ENCODE measurements at regions of chr17 and their contacts with region 1.

Region 1: DNA sequence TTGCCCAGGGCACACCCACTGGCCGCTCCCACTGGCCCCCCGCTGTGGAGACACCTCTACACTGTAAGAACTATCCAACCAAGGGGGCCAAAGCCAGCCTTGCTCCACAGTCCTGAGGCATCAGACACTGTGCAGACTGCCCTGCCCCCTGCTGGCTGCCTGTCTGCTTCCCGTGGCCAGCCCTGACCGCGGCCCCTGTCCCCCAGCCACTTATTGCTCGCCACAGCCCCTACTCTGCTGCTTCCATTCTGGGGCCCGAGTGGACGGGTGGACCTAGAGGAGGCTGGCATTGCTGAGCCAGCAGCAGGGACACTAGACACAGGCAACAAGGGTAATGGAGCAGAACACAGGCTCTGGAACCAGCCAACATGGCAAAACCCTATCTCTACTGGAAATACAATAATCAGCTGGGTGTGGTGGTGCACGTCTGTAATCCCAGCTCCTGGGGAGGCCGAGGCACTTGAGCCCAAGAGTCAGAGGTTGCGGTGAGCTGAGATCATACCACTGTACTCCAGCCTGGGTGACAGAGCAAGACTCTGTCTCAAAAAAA is 19.7 kb upstream of the LRRC37A3 start:
- DNase-seq: peak; percentile 59 to 67
- ATAC-seq: peak; percentile 67 to 84 (median 74)
- H3K4me3 ChIP-seq: no peak overlapping the region
- H3K27ac ChIP-seq: no peak overlapping the region
- H3K4me1 ChIP-seq: no peaks in the 10 kb centered on the region
- H3K27me3 ChIP-seq: no peaks in the 10 kb centered on the region
- CTCF ChIP-seq: no peak

Region 2: DNA sequence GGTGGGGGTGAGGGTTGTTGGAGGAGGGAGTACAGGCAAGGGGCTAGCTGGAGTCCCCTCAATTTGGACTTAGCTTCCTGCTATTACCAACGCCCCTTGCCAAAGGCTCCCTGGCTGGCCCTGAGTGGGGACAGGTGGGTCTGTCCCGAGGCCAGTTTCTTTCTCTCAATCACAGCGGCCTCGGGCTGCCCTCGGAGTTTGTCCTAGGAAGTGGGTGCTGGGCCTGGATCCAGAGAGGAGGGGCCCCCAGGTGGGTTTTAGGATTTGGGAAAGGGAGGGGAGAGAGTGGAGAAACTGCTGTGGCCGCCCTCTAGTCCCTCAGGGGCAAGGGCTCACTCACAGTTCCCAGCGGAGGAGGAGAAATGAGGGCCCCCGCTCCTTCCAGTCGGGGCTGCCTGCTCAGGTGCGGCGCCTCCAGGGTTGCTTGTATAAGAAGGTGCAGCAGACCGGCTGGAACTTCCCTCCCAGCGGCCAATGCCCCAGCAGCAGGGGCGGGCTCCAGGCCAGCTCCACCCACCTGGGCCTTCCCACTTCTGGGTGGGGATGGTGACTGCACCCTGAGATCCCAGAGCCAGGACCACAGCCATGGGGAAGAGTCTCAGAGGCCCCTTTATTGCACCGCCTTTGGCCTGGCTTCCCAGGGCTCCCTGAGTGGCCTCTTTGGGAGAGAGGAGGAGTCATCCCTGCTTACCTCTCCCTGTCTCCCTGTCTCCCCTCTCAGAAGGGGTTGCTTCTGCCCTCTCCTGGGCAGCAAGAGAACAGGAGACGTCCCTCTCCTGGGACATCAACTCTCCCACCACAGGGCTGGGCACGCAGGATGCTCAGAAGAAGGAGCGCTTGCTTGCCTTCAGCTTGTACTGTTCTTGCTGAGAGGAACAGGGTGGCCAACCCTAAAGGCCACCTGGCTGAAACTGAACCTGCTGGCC is 164.9 kb before region 1 on chr17:
- intact Hi-C with region 1: loop called in 1 of 2 experiments (anchors 10 kb)
- DNase-seq: peak in 1 of 2 donors; percentile 63
- ATAC-seq: no peak
- H3K4me3 ChIP-seq: no peak overlapping the region
- H3K27ac ChIP-seq: no peak overlapping the region
- H3K4me1 ChIP-seq: peaks cover 8% of the 10 kb centered on the region
- H3K27me3 ChIP-seq: peaks cover 0 to 2% (median 0%) of the 10 kb centered on the region in 3 donors
- CTCF ChIP-seq: no peak

Region 3: GRCh38 chr17:64786337-64786736 is 152.7 kb before region 1 on chr17:
- intact Hi-C with region 1: no loop called
- DNase-seq: no peak
- ATAC-seq: peak in 3 of 4 donors; percentile 24 to 80 (median 42)
- H3K4me3 ChIP-seq: no peak overlapping the region
- H3K27ac ChIP-seq: no peak overlapping the region
- H3K4me1 ChIP-seq: peaks cover 15% of the 10 kb centered on the region
- H3K27me3 ChIP-seq: no peaks in the 10 kb centered on the region
- CTCF ChIP-seq: no peak

Measured in psoas muscle (tissue), 8 donors.